AG04449 (cell line): ENCODE measurements at regions of chr16 and their contacts with region 1.

Region 1: GRCh38 chr16:58814348-58814801 is 80.3 kb upstream of the GOT2 start:
- DNase-seq: no peak
- H3K4me3 ChIP-seq: peak overlapping the region; percentile 44
- CTCF ChIP-seq: peak; percentile 83

Region 2: DNA sequence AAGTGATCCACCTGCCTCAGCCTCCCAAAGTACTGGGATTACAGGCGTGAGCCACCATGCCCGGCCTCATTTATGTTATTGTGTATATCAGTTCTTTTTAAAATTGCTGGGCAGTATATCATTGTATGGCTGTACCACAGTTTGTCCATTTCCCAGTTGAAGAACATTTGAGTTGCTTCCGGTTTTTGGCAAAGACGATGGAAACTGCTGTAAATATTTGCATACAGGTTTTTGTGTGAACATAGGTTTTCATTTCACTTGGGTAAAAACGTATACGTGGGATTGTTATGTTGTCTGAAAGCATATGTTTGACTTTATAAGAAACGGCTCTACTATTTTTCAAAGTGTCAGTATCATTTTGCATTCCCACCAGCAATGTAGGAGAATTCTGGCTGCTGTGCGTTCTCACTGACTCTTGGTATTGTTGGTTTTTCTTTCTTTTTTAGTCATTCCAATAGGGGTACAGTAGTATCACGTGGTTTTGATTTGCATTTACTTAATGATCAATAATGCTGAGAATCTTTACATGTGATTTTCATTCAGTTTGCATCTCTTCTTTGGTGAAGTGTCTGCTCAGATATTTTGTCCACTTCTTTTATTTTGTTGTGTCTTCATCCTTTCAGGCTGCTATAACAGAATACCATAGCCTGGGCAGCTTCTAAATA is 17.1 kb before region 1 on chr16:
- CTCF ChIA-PET with region 1: interaction called, 11 read pairs
- POLR2A ChIA-PET with region 1: no interaction called
- DNase-seq: no peak
- H3K4me3 ChIP-seq: no peak overlapping the region
- CTCF ChIP-seq: no peak

Region 3: DNA sequence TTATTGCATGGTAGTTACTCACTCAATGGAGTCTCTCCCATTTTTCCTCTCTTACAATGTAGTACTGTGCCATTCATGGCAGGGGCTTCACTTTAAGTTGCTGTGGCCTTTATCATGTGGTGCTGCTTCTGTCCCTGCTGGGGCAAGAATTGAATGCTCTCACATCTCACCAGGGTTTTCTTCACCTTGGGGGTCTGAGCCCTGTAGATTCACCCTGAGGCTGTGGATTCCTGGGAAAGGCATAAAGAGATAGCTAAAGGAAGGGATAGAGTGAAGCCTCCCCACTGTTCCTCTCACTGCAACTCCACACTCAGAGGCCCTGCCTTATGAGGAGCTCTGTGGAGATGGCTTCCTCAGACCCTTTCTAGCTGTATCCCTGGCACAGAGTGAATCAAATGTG is 98.2 kb after region 1 on chr16:
- CTCF ChIA-PET with region 1: no interaction called
- POLR2A ChIA-PET with region 1: no interaction called
- DNase-seq: no peak
- H3K4me3 ChIP-seq: no peak overlapping the region
- CTCF ChIP-seq: no peak